ENCODE measurements at regions of chr6 and their contacts with region 1.

Region 1: DNA sequence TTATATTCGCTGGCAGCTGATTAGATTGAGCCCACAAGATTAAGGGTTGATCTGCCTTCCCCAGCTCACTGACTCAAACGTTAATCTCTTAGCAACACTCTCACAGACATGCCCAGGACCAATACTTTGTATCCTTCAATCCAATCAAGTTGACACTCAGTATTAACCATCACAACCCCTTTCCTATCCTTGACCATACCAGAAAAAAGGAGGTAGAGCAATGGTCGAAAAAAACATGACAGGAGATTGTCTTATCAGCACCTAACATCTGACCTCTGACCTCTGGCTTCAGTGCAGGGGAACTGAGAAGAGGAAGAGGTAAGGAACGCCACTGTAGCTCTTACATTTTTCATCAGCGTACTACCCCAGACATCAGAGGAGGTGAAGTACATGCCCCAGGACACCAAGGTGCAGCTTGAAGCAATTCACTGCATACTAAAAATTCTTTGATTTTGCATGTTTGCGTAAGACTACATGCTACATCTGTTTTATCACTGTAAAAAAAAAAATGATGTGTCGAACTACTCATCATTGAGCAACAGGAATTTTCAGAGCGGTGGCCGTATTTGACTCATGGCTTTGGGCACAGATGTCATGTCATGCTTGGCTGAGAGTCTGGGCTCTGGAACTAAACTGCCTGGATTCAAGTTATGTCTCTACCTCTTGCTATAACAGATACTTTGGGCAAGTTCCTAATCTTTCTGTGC is 188.0 kb upstream of the TAB2 start:
- DNase-seq: no peak
- H3K4me3 Mint-ChIP-seq: no peak overlapping the region
- H3K27ac Mint-ChIP-seq: peak overlapping the region; percentile 90
- H3K4me1 Mint-ChIP-seq: peaks cover 65% of the 10 kb centered on the region
- H3K27me3 Mint-ChIP-seq: no peaks in the 10 kb centered on the region

Region 2: DNA sequence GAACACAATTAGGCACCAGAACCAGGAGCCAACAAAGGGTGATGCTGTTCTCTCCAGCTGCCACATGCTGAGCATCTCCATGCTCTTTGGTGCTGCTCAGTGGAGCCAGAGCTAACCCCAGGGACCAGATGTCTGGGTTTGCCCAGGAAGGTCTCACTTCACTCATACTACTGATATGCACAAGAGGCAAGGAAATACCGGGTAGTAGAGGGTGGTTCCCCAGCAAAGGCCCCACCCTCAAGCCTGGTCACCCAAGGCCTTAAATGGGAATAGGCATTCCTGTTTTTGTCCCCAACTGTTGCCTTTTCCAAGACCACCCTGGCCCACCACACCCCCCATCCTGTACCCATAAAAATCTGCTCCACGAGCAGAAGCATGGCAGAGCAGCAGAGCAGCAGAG is 16.5 kb before region 1 on chr6:
- intact Hi-C with region 1: loop called (anchors 2 kb)
- DNase-seq: no peak
- H3K4me3 Mint-ChIP-seq: no peak overlapping the region
- H3K27ac Mint-ChIP-seq: peak overlapping the region; percentile 64
- H3K4me1 Mint-ChIP-seq: peaks cover 62% of the 10 kb centered on the region
- H3K27me3 Mint-ChIP-seq: no peaks in the 10 kb centered on the region